ENCODE measurements at regions of chr7 and their contacts with region 1.

Region 1: DNA sequence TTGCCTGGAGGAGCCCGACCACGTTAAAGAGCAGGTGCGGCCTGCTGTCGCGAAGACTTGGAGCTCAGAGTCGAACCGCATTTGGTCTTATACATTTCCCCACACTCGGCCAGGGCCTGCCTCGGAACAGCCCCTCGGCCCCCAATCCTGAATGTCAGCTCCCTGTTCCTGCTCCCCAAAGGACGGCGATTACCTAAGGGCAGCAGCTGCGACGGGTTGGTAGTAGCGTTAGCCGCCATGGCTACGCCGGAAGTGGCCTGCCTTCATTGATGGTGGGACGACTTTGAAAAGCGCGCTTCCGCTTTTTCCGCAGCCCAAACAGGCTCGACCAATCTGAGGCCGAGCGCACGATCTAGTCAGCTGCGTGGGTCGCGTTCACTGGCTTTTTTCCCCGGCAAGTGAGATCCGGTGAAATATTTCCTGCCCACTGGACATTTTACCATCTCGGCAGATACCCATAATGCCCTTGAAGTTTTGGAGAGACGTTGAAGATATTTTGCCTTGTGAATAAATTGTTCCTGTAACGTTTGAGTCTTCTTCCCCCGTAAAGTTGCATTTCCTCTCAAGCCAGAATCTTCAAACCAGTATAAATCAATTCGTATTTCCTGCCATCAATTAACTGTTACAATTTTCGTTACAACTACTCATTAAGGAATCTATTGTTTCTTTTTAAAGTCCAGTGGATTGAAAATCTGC is at the start of gene LSM5:
- DNase-seq: peak; percentile 95
- ATAC-seq: peak; percentile 70
- H3K4me3 Mint-ChIP-seq: peak within 1 kb of the TSS; percentile 82
- H3K27ac Mint-ChIP-seq: peak within 1 kb of the TSS; percentile 99
- H3K4me1 Mint-ChIP-seq: peaks cover 27% of the 10 kb centered on the region
- H3K27me3 Mint-ChIP-seq: no peaks in the 10 kb centered on the region
- total RNA-seq, gene LSM5: 75.6 to 135 TPM

Region 2: GRCh38 chr7:32164346-32164957 is 325.8 kb before region 1 on chr7:
- CTCF ChIA-PET with region 1: no interaction called
- POLR2A ChIA-PET with region 1: no interaction called
- intact Hi-C with region 1: no loop called
- DNase-seq: no peak
- ATAC-seq: no peak
- H3K4me3 Mint-ChIP-seq: no peak overlapping the region
- H3K27ac Mint-ChIP-seq: no peak overlapping the region
- H3K4me1 Mint-ChIP-seq: no peaks in the 10 kb centered on the region
- H3K27me3 Mint-ChIP-seq: no peaks in the 10 kb centered on the region

Region 3: DNA sequence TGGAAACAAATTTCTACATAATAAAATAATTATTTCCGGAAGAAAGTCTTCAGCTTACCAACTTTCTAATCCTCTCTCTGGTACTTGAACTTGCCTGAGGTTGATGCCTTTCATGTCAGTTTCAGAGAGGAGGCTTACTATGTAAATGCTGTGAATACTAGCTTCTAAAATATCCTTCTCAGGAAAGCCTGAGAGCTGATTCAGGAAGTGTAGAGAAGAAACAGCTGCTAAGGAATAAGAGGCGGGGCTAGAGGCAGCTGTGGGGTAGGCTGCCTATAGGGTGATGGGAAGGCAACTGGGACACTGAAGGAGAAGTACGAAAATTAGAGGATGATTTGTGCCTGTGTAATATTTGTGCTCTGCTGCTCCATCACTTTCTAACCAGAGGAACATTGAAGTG is 74.3 kb after region 1 on chr7:
- CTCF ChIA-PET with region 1: interaction called, 4 read pairs
- POLR2A ChIA-PET with region 1: no interaction called
- intact Hi-C with region 1: loop called (anchors 5 kb)
- DNase-seq: no peak
- ATAC-seq: no peak
- H3K4me3 Mint-ChIP-seq: no peak overlapping the region
- H3K27ac Mint-ChIP-seq: no peak overlapping the region
- H3K4me1 Mint-ChIP-seq: peaks cover 18% of the 10 kb centered on the region
- H3K27me3 Mint-ChIP-seq: no peaks in the 10 kb centered on the region

Region 4: GRCh38 chr7:32639122-32639521 is 148.8 kb after region 1 on chr7:
- CTCF ChIA-PET with region 1: interaction called, 3 read pairs
- POLR2A ChIA-PET with region 1: no interaction called
- intact Hi-C with region 1: loop called in 1 of 2 experiments (anchors 5 kb)
- DNase-seq: no peak
- ATAC-seq: no peak
- H3K4me3 Mint-ChIP-seq: no peak overlapping the region
- H3K27ac Mint-ChIP-seq: no peak overlapping the region
- H3K4me1 Mint-ChIP-seq: peaks cover 6% of the 10 kb centered on the region
- H3K27me3 Mint-ChIP-seq: peaks cover 6% of the 10 kb centered on the region

Region 5: DNA sequence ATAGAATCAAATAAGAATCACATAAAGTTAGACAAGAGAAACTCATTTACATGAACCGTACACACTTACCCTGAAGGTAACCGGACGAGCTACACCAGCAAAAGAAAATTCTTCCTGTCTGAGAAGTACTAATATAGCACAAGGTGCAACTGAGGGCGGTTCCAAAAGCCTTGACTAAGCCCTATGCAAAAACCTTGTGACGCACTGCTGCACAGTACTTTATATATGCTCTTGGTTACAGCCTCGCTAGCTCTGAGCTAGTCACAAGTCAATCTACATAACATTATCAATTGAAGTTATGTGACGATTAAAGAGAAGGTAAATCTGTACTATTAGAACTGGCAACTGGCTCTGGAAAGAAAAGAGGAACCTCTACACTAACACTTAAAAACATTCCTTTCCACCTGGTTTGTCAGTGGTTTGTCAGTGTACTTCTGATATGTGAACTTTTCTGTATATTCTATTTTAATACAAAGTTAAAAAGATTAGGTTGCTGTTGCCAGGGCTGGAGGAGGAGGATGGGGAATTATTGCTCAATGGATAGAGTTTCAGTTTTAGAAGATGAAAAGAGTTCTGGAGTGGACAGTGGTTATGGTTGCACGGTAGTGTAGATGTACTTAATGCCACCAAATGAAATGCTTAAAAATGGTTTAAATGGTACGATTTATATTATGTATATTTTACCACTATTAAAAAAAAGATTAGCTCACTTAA is 550.7 kb after region 1 on chr7:
- CTCF ChIA-PET with region 1: no interaction called
- POLR2A ChIA-PET with region 1: no interaction called
- intact Hi-C with region 1: loop called in 1 of 2 experiments (anchors 5 kb)
- DNase-seq: peak; percentile 79
- ATAC-seq: peak; percentile 99
- H3K4me3 Mint-ChIP-seq: peak overlapping the region; percentile 66
- H3K27ac Mint-ChIP-seq: peak overlapping the region; percentile 77
- H3K4me1 Mint-ChIP-seq: peaks cover 62% of the 10 kb centered on the region
- H3K27me3 Mint-ChIP-seq: no peaks in the 10 kb centered on the region

Region 6: DNA sequence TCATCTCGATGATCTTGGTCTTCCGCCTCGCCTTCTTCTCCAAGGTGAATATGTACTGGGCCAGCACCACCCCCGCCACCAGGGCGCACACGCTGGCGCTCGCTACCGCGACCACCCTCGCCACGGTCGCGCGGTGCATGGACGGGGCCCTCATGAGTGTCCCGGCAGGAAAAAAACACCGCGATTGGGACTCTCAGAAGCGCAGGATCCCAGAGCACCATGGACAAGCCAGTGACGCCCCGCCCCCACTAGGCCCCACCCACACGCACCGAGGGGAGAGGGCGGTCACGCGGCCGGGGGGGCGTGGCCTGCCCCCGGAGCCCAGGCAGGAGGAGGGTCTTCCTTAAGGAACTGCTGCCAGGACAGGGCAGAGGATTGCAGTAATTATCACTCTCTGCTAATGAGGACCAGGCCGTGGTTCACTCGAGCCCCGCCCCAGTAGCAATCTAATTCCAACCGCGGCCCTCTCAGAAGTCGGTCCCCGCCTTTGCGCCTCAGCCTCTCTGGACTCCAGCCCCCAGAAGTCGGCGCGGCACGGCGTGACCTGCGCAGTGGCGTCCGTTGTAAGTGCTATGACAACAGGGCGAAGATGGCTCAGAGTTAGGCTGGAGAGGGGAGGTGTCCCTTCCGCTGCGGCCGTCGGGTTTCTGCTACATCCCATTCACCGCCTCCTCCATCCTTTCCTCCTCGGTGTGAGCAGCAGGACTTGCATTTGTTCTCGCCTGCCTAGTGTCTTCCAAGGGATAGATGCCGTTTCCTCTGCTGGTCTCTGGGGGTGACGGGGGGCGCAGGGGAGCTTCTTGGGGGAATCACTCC is 638.9 kb after region 1 on chr7 and contains the start of gene BBS9:
- CTCF ChIA-PET with region 1: no interaction called
- POLR2A ChIA-PET with region 1: no interaction called
- intact Hi-C with region 1: loop called (anchors 1 to 2 kb)
- DNase-seq: peak; percentile 96
- ATAC-seq: peak; percentile 99
- H3K4me3 Mint-ChIP-seq: peak within 1 kb of the TSS; percentile 95
- H3K27ac Mint-ChIP-seq: peak within 1 kb of the TSS; percentile 89
- H3K4me1 Mint-ChIP-seq: peaks cover 16% of the 10 kb centered on the region
- H3K27me3 Mint-ChIP-seq: no peaks in the 10 kb centered on the region
- total RNA-seq, gene BBS9: 4.1 to 9.9 TPM

Measured in activated CD4-positive, alpha-beta T cell treated with anti-CD3 and anti-CD28 coated beads for 36 hours (primary cell).